MCF 10A (cell line): ENCODE measurements at regions of chr18 and their contacts with region 1.

Region 1: GRCh38 chr18:32289483-32290075 is 99.7 kb downstream of the MEP1B start:
- DNase-seq: peak; percentile 82
- H3K4me3 Mint-ChIP-seq: no peak overlapping the region
- H3K27ac Mint-ChIP-seq: no peak overlapping the region
- H3K4me1 Mint-ChIP-seq: peaks cover 26% of the 10 kb centered on the region
- H3K27me3 Mint-ChIP-seq: no peaks in the 10 kb centered on the region
- CTCF ChIP-seq: peak; percentile 59

Region 2: GRCh38 chr18:32276906-32277305 is 12.7 kb before region 1 on chr18:
- CTCF ChIA-PET with region 1: interaction called, 100 read pairs
- POLR2A ChIA-PET with region 1: interaction called, 9 read pairs
- intact Hi-C with region 1: no loop called
- DNase-seq: no peak
- H3K4me3 Mint-ChIP-seq: no peak overlapping the region
- H3K27ac Mint-ChIP-seq: no peak overlapping the region
- H3K4me1 Mint-ChIP-seq: peaks cover 18% of the 10 kb centered on the region
- H3K27me3 Mint-ChIP-seq: no peaks in the 10 kb centered on the region
- CTCF ChIP-seq: no peak

Region 3: GRCh38 chr18:32301976-32302743 is 12.6 kb after region 1 on chr18:
- CTCF ChIA-PET with region 1: interaction called, 15 read pairs
- POLR2A ChIA-PET with region 1: interaction called, 10 read pairs
- intact Hi-C with region 1: no loop called
- DNase-seq: peak; percentile 77
- H3K4me3 Mint-ChIP-seq: no peak overlapping the region
- H3K27ac Mint-ChIP-seq: peak overlapping the region; percentile 78
- H3K4me1 Mint-ChIP-seq: peaks cover 32% of the 10 kb centered on the region
- H3K27me3 Mint-ChIP-seq: no peaks in the 10 kb centered on the region
- CTCF ChIP-seq: no peak